ENCODE measurements at regions of chr9 and their contacts with region 1.

Region 1: GRCh38 chr9:128927731-128928411 is 7.1 kb downstream of the PHYHD1 start:
- DNase-seq: peak; percentile 65
- H3K4me3 Mint-ChIP-seq: no peak overlapping the region
- H3K27ac Mint-ChIP-seq: peak overlapping the region; percentile 75
- H3K4me1 Mint-ChIP-seq: peaks cover 7% of the 10 kb centered on the region
- H3K27me3 Mint-ChIP-seq: no peaks in the 10 kb centered on the region
- CTCF ChIP-seq: peak; percentile 87

Region 2: GRCh38 chr9:128863647-128864046 is 64.2 kb before region 1 on chr9:
- CTCF ChIA-PET with region 1: interaction called, 172 read pairs
- POLR2A ChIA-PET with region 1: interaction called, 4 read pairs
- intact Hi-C with region 1: loop called (anchors 1 kb)
- DNase-seq: peak; percentile 77
- H3K4me3 Mint-ChIP-seq: no peak overlapping the region
- H3K27ac Mint-ChIP-seq: no peak overlapping the region
- H3K4me1 Mint-ChIP-seq: peaks cover 14% of the 10 kb centered on the region
- H3K27me3 Mint-ChIP-seq: no peaks in the 10 kb centered on the region
- CTCF ChIP-seq: peak; percentile 95

Region 3: DNA sequence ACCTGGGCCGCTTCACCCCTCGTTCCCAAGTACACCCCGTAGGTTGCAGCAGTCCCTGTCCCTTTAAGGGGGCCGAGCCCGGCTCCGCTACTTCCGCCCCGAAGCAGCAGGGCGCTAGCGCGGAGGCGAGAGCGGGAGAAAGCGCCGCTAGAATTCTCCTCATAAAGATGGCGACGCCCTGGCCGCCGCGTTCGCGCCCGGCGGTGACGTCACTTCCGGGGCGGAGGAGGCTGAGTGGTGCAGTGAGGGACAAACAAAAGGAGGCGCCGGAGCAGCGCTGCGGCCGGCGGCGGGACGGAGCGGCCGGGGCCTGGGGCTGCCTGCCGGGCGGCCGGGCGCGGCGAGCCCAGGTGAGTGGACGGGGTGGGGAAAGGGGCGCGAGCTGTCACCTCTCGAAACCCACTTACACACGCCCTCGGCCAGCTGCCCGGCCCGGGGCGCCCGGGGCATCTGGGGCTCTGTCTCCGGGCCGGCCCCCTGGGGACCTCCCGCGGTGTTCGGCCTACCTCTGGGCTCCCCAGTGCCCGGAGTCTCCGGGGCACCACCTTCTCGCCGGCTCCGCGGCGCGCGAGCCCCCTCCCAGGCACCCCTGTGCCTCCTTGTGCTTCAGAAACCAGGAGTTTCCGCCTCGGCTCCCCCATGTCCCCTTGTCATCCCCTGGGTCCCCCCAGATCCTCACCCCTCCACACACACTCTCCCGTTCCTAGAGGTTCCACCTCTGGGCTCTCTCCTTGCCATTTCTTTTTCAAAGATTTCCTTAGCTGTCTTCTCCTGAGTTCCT is 45.8 kb before region 1 on chr9 and contains the starts of genes KYAT1 and LRRC8A:
- CTCF ChIA-PET with region 1: interaction called, 59 read pairs
- POLR2A ChIA-PET with region 1: interaction called, 9 read pairs
- intact Hi-C with region 1: no loop called
- DNase-seq: peak; percentile 96
- H3K4me3 Mint-ChIP-seq: peak within 1 kb of the TSS; percentile 99
- H3K27ac Mint-ChIP-seq: peak within 1 kb of the TSS; percentile 95
- H3K4me1 Mint-ChIP-seq: peaks cover 40% of the 10 kb centered on the region
- H3K27me3 Mint-ChIP-seq: no peaks in the 10 kb centered on the region
- CTCF ChIP-seq: no peak
- total RNA-seq, gene KYAT1: 3.8 and 5.7 TPM in 2 replicates
- total RNA-seq, gene LRRC8A: 30.9 and 31.6 TPM in 2 replicates

Region 4: GRCh38 chr9:128902351-128903078 is 25.4 kb before region 1 on chr9:
- CTCF ChIA-PET with region 1: interaction called, 10 read pairs
- POLR2A ChIA-PET with region 1: interaction called, 4 read pairs
- intact Hi-C with region 1: no loop called
- DNase-seq: peak; percentile 72
- H3K4me3 Mint-ChIP-seq: peak overlapping the region; percentile 40
- H3K27ac Mint-ChIP-seq: peak overlapping the region; percentile 75
- H3K4me1 Mint-ChIP-seq: peaks cover 28% of the 10 kb centered on the region
- H3K27me3 Mint-ChIP-seq: no peaks in the 10 kb centered on the region
- CTCF ChIP-seq: no peak

Region 5: DNA sequence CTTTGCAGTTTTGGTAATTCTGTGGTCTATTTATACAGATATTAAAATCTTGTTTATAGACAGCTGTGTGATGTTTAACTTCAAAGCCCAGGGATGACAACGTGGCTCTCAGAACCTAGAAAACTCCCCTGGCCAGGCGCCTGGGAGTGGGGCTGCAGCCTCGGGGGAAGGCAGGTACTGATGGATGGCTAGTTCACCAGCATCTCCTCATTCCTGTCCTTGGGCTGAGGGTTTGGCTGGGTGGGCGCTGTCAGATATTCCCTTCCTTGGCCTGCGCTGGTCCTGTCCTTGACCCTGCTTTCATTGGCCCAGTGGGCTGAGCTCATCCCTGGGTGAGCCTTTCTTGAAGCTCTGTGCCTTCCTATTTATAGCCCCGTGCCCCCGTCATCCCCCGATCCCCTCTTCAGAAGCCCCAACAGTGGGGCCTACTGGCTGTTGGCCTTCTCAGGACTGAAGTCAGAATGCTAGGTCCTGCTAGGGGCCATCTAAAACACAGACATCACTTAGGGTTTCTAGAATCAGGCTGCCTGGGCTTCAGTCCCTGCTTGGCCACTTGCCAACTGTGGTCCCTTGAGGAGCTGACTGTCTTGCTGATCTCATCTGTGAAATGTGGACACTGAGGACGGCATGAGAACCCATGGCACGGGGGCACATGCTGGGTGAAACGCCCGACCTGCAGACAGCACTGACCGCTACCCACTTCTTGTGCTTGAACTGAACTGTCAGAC is 79.3 kb after region 1 on chr9:
- CTCF ChIA-PET with region 1: no interaction called
- POLR2A ChIA-PET with region 1: no interaction called
- intact Hi-C with region 1: no loop called
- DNase-seq: no peak
- H3K4me3 Mint-ChIP-seq: no peak overlapping the region
- H3K27ac Mint-ChIP-seq: no peak overlapping the region
- H3K4me1 Mint-ChIP-seq: no peaks in the 10 kb centered on the region
- H3K27me3 Mint-ChIP-seq: no peaks in the 10 kb centered on the region
- CTCF ChIP-seq: no peak